CD4-positive, alpha-beta memory T cell (primary cell): ENCODE measurements at regions of chr5 and their contacts with region 1.

Region 1: GRCh38 chr5:159209438-159210305 is at the start of gene RNF145:
- DNase-seq: peak; percentile 93 to 96 (median 94)
- H3K4me3 ChIP-seq: peak within 1 kb of the TSS; percentile 82 to 85
- H3K4me3 Mint-ChIP-seq: peak within 1 kb of the TSS; percentile 93 to 99 (median 96)
- H3K27ac ChIP-seq: peak within 1 kb of the TSS; percentile 87
- H3K27ac Mint-ChIP-seq: peak within 1 kb of the TSS; percentile 96 to 100 (median 98)
- H3K4me1 ChIP-seq: peaks cover 33% of the 10 kb centered on the region
- H3K4me1 Mint-ChIP-seq: peaks cover 32 to 55% (median 38%) of the 10 kb centered on the region in 4 donors
- H3K27me3 ChIP-seq: no peaks in the 10 kb centered on the region
- H3K27me3 Mint-ChIP-seq: peaks cover 0 to 1% of the 10 kb centered on the region in 2 donors
- total RNA-seq, gene RNF145: 62.4 to 67.8 TPM

Region 2: GRCh38 chr5:159100025-159100781 is 109.5 kb before region 1 on chr5:
- CTCF ChIA-PET with region 1: no interaction called
- POLR2A ChIA-PET with region 1: no interaction called
- intact Hi-C with region 1: loop called (anchors 5 kb)
- DNase-seq: peak; percentile 78 to 84 (median 81)
- H3K4me3 ChIP-seq: peak overlapping the region; percentile 23 to 46
- H3K4me3 Mint-ChIP-seq: peak overlapping the region; percentile 87 to 95 (median 90)
- H3K27ac ChIP-seq: no peak overlapping the region
- H3K27ac Mint-ChIP-seq: peak overlapping the region; percentile 82 to 96 (median 90)
- H3K4me1 ChIP-seq: peaks cover 39% of the 10 kb centered on the region
- H3K4me1 Mint-ChIP-seq: peaks cover 21 to 51% (median 34%) of the 10 kb centered on the region in 4 donors
- H3K27me3 ChIP-seq: peaks cover 14% of the 10 kb centered on the region
- H3K27me3 Mint-ChIP-seq: peaks cover 44 to 46% of the 10 kb centered on the region in 2 donors

Region 3: DNA sequence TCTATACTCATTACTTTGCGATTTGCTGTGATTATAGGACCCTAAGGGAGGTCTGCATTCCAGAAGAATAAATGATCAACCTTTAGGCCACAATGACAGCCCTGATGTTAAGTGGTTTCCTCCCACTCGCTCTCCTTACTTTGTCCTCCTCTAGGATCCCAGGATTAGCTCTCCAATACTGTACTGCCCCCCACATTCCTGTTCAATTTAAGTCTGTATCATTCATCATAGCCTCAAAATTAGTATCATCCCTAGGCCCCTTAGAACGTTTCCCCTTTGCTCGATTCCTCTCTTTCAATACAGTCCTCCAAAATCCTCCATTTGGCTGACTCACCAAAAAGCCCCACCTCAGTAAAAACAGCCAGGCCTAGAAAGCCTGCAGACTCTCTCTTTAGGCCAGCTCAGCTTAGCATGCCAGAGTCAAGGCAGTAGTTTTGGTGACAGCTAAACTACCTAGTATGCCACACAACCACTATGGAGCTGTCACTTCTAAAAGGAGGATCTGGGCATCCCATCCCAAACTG is 24.8 kb before region 1 on chr5:
- CTCF ChIA-PET with region 1: interaction called, 6 read pairs
- POLR2A ChIA-PET with region 1: interaction called, 16 read pairs
- intact Hi-C with region 1: no loop called
- DNase-seq: no peak
- H3K4me3 ChIP-seq: no peak overlapping the region
- H3K4me3 Mint-ChIP-seq: peak overlapping the region in 1 of 8 donors; percentile 13
- H3K27ac ChIP-seq: no peak overlapping the region
- H3K27ac Mint-ChIP-seq: peak overlapping the region; percentile 6 to 89 (median 78)
- H3K4me1 ChIP-seq: peaks cover 50% of the 10 kb centered on the region
- H3K4me1 Mint-ChIP-seq: peaks cover 38 to 70% (median 57%) of the 10 kb centered on the region in 4 donors
- H3K27me3 ChIP-seq: no peaks in the 10 kb centered on the region
- H3K27me3 Mint-ChIP-seq: no peaks in the 10 kb centered on the region

Region 4: DNA sequence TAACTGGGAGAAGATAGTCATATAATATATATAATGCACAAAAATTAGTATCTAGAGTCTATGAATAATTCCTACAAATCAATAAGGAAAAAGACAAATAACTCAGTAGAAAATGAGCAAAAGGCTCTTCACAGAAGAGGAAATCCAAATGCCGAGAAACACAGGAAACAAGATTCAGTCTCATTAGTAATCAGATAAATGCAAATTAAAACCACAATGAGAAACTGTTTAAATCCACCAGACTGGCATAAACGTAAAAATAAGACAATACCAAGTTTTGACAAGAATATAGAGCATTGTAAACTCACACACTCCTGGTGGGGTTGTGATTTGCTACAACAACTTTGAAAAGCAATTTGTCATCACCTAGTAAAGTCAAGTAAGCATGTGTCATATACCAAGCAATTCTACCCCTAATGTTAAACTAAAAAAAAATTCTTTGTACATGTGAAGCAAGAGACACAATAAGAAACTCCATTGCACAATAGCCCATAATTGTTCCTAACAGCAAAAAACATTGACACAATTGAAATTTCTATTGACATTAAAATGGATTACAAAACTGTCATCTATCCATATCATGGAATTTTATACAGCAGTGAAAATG is 32.4 kb after region 1 on chr5:
- CTCF ChIA-PET with region 1: no interaction called
- POLR2A ChIA-PET with region 1: interaction called, 6 read pairs
- intact Hi-C with region 1: loop called (anchors 2 kb)
- DNase-seq: no peak
- H3K4me3 ChIP-seq: no peak overlapping the region
- H3K4me3 Mint-ChIP-seq: peak overlapping the region in 4 of 8 donors; percentile 2 to 34 (median 24)
- H3K27ac ChIP-seq: no peak overlapping the region
- H3K27ac Mint-ChIP-seq: no peak overlapping the region
- H3K4me1 ChIP-seq: peaks cover 15% of the 10 kb centered on the region
- H3K4me1 Mint-ChIP-seq: peaks cover 11 to 20% (median 13%) of the 10 kb centered on the region in 4 donors
- H3K27me3 ChIP-seq: no peaks in the 10 kb centered on the region
- H3K27me3 Mint-ChIP-seq: peaks cover 2 to 4% of the 10 kb centered on the region in 2 donors

Region 5: DNA sequence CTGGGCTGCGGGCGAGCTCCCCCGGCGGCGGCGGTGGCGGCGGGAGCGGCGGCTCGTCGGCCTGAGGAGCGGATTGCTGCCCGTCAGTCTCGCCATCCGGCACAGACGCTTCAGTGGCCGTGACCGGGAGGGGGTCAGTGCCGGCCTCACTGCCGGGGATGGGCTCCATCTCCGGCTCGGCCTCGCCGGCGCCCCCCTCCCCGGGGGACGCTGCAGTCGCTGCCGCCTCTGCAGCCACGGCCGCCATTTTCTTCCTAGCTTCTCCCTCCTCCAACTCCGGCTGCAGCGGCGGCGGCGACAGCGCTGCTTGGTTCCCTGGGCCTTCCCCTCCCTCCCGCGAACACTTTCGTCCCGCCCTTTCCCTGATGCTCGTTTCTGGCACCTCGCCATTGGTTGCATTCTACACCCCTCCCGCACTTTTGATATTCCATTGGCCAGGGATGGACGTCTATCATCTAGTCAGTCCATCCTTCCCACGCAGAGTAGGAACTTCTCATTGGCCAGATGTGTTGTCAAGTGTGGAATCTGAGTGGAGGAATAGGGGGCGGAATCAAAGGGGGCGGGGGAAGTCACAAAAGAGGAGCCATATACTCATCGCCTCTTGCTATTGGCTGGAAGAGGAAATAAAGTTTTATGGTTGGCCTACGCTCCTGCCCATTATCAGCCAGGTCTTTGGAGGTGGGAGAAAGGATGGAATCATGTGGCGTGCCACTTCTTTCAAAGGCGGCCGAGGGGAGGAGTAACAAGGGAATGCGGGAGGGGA is 909.7 kb after region 1 on chr5 and contains the start of gene PWWP2A:
- CTCF ChIA-PET with region 1: no interaction called
- POLR2A ChIA-PET with region 1: interaction called, 5 read pairs
- intact Hi-C with region 1: loop called (anchors 1 kb)
- DNase-seq: peak; percentile 97 to 100 (median 99)
- H3K4me3 ChIP-seq: peak within 1 kb of the TSS; percentile 69 to 82
- H3K4me3 Mint-ChIP-seq: peak within 1 kb of the TSS; percentile 89 to 98 (median 92)
- H3K27ac ChIP-seq: peak within 1 kb of the TSS; percentile 87
- H3K27ac Mint-ChIP-seq: peak within 1 kb of the TSS; percentile 86 to 98 (median 91)
- H3K4me1 ChIP-seq: peaks cover 14% of the 10 kb centered on the region
- H3K4me1 Mint-ChIP-seq: peaks cover 12 to 23% (median 16%) of the 10 kb centered on the region in 4 donors
- H3K27me3 ChIP-seq: no peaks in the 10 kb centered on the region
- H3K27me3 Mint-ChIP-seq: peaks cover 0 to 4% of the 10 kb centered on the region in 2 donors
- total RNA-seq, gene PWWP2A: 38.7 to 40.6 TPM